Breast epithelium (tissue), 4 donors: ENCODE measurements at regions of chr9 and their contacts with region 1.

Region 1: GRCh38 chr9:14597171-14597799 is 95.9 kb downstream of the ZDHHC21 start:
- DNase-seq: no peak
- H3K4me3 ChIP-seq: no peak overlapping the region
- H3K27ac ChIP-seq: no peak overlapping the region
- H3K4me1 ChIP-seq: no peaks in the 10 kb centered on the region
- H3K27me3 ChIP-seq: no peaks in the 10 kb centered on the region
- CTCF ChIP-seq: no peak
- POLR2A ChIP-seq: no peak

Region 2: GRCh38 chr9:14383294-14383693 is 214.0 kb before region 1 on chr9:
- intact Hi-C with region 1: no loop called
- DNase-seq: no peak
- H3K4me3 ChIP-seq: no peak overlapping the region
- H3K27ac ChIP-seq: no peak overlapping the region
- H3K4me1 ChIP-seq: no peaks in the 10 kb centered on the region
- H3K27me3 ChIP-seq: no peaks in the 10 kb centered on the region
- CTCF ChIP-seq: no peak
- POLR2A ChIP-seq: no peak

Region 3: GRCh38 chr9:14573333-14573732 is 24.0 kb before region 1 on chr9:
- intact Hi-C with region 1: no loop called
- DNase-seq: no peak
- H3K4me3 ChIP-seq: no peak overlapping the region
- H3K27ac ChIP-seq: no peak overlapping the region
- H3K4me1 ChIP-seq: no peaks in the 10 kb centered on the region
- H3K27me3 ChIP-seq: no peaks in the 10 kb centered on the region
- CTCF ChIP-seq: no peak
- POLR2A ChIP-seq: no peak

Region 4: DNA sequence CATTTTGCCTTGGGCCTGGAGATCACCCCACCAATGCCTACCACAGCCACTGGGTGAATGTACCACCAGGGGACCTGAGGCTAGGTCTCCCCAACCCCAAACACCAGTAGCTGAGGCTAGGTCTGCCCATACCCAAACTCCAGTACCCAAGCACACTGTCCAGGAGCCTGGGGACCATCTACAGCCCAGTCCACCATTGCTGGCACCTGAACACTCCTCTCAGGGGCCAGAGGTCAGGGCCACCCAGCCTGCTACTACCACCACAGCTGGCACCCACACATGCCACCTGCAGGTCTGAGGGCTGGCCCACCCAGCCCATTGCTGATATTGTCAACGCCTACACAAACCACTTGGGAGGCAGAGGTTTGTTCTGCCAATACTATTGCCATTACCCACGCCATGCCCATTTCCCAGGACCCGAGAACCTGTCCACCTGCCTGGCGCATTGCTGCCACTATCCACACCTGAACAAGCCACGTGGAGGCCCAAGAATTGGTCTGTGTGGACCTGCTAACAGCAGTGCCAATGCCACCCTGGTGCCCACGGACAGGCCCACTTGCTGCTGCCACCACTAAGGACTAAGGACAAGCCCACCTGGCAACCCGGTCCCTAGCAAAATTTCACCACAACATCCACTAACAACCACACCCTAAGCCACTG is 36.8 kb after region 1 on chr9:
- intact Hi-C with region 1: no loop called
- DNase-seq: no peak
- H3K4me3 ChIP-seq: no peak overlapping the region
- H3K27ac ChIP-seq: no peak overlapping the region
- H3K4me1 ChIP-seq: no peaks in the 10 kb centered on the region
- H3K27me3 ChIP-seq: no peaks in the 10 kb centered on the region
- CTCF ChIP-seq: no peak
- POLR2A ChIP-seq: no peak

Region 5: GRCh38 chr9:16257604-16258003 is 1660.3 kb after region 1 on chr9:
- intact Hi-C with region 1: loop called (anchors 10 kb)
- DNase-seq: no peak
- H3K4me3 ChIP-seq: no peak overlapping the region
- H3K27ac ChIP-seq: no peak overlapping the region
- H3K4me1 ChIP-seq: no peaks in the 10 kb centered on the region
- H3K27me3 ChIP-seq: no peaks in the 10 kb centered on the region
- CTCF ChIP-seq: no peak
- POLR2A ChIP-seq: no peak